ENCODE measurements at regions of chr5 and their contacts with region 1.

Region 1: DNA sequence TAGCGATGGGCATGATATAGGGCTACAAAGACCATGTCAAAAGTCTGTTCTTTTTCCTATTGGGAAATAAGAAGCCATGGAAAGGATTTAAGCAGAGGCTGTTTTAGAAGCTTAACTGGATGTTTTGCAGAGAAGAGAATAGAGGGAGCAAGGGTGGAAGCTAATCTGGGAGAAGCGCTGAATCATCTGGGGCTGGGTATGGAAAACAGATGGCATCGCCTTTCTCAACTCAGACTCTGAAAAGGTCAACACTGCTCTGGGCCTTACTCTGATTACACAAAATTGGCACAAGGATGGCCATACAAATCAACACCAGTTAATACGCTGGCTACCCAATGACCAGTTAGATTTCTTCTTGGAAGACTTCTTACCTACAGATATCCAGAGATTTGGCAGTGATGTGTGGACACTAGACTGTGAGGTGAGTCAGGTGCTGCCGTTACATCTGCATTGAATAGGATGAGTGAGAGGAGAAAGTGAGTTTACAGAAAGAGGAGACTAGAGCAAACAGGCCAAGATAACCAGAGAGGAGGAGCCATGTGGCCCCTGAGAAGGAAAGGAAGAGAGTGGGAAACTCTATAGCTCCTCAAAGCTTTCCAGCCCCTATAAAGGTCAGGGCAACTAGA is 6.2 kb upstream of the TCERG1 start:
- DNase-seq: no peak
- H3K4me3 Mint-ChIP-seq: no peak overlapping the region
- H3K27ac Mint-ChIP-seq: no peak overlapping the region
- H3K4me1 Mint-ChIP-seq: no peaks in the 10 kb centered on the region
- H3K27me3 Mint-ChIP-seq: peaks cover 30% of the 10 kb centered on the region

Region 2: DNA sequence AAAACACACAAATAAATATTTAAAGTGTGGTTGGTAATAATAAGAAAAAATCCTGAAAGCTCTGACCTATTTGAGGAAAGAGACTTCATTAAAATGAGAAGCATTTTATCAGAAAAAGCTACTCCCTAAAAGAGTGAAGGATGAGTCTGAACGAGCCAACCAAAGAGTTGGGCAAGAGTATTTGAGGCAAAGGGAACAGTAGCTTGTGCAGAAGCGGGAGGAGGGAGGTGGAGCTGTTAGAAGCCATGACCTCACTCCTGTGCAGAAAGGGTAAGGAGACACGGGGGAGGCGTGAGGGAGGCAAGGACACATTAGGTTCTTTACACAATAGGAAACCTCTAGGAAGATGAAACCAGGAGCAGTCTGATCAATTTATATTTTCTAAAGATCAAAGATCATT is 475.2 kb before region 1 on chr5:
- CTCF ChIA-PET with region 1: no interaction called
- POLR2A ChIA-PET with region 1: no interaction called
- DNase-seq: no peak
- H3K4me3 Mint-ChIP-seq: no peak overlapping the region
- H3K27ac Mint-ChIP-seq: no peak overlapping the region
- H3K4me1 Mint-ChIP-seq: no peaks in the 10 kb centered on the region
- H3K27me3 Mint-ChIP-seq: peaks cover 16% of the 10 kb centered on the region

Region 3: GRCh38 chr5:146491286-146491685 is 50.3 kb after region 1 on chr5:
- CTCF ChIA-PET with region 1: no interaction called
- POLR2A ChIA-PET with region 1: interaction called, 12 read pairs
- DNase-seq: no peak
- H3K4me3 Mint-ChIP-seq: no peak overlapping the region
- H3K27ac Mint-ChIP-seq: no peak overlapping the region
- H3K4me1 Mint-ChIP-seq: no peaks in the 10 kb centered on the region
- H3K27me3 Mint-ChIP-seq: no peaks in the 10 kb centered on the region

Measured in activated CD4-positive, alpha-beta T cell treated with anti-CD3 and anti-CD28 coated beads, Interleukin-2, amount 10 ng/mL, durations not matched to agents 7 days and 5 days (primary cell).